ENCODE measurements at regions of chr13 and their contacts with region 1.

Region 1: GRCh38 chr13:99436686-99437416 is 64.4 kb upstream of the TM9SF2 start:
- DNase-seq: peak; percentile 98
- H3K4me3 Mint-ChIP-seq: peak overlapping the region; percentile 21
- H3K27ac Mint-ChIP-seq: peak overlapping the region; percentile 23
- H3K4me1 Mint-ChIP-seq: peaks cover 55% of the 10 kb centered on the region
- H3K27me3 Mint-ChIP-seq: no peaks in the 10 kb centered on the region

Region 2: GRCh38 chr13:99041788-99042187 is 395.1 kb before region 1 on chr13:
- CTCF ChIA-PET with region 1: interaction called, 3 read pairs
- intact Hi-C with region 1: loop called (anchors 5 kb)
- DNase-seq: no peak
- H3K4me3 Mint-ChIP-seq: no peak overlapping the region
- H3K27ac Mint-ChIP-seq: no peak overlapping the region
- H3K4me1 Mint-ChIP-seq: peaks cover 80% of the 10 kb centered on the region
- H3K27me3 Mint-ChIP-seq: no peaks in the 10 kb centered on the region

Region 3: GRCh38 chr13:99214232-99214631 is 222.6 kb before region 1 on chr13:
- CTCF ChIA-PET with region 1: interaction called, 3 read pairs
- intact Hi-C with region 1: loop called (anchors 1 kb)
- DNase-seq: peak; percentile 83
- H3K4me3 Mint-ChIP-seq: peak overlapping the region; percentile 72
- H3K27ac Mint-ChIP-seq: peak overlapping the region; percentile 78
- H3K4me1 Mint-ChIP-seq: peaks cover 82% of the 10 kb centered on the region
- H3K27me3 Mint-ChIP-seq: no peaks in the 10 kb centered on the region

Region 4: DNA sequence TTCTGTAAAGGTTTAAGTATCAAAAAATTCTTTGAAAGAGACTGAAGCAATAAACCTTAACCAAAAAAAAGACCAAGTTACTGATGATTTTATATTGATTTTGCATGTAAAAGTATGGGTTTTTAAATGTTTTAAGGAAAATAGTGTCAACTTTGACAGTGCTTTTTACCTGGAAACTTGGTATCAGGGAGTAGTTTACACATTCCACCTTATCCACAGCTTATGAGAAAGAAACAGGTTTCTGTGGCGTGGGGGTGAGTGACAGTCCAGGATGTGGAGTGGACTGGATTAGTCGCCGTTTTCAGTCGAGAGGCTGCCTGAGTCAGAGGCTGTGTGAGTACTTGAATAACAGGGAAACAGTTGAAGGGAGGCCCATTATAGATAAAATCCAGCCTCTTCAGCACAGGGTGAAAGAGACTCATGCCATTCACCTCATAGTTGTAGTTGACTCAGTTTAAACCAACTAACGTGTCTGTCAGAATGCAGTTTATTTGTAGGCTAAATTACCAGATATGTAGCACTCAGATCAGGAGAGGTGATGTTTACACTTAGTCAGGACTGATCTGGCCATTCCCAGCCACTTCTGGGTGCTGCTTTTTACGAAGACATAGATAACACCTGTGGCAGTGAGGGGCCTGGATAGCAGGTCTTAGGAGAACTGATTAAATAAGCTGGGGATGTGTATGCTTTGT is 129.1 kb before region 1 on chr13:
- CTCF ChIA-PET with region 1: interaction called, 59 read pairs
- intact Hi-C with region 1: loop called (anchors 1 kb)
- DNase-seq: peak; percentile 89
- H3K4me3 Mint-ChIP-seq: peak overlapping the region; percentile 93
- H3K27ac Mint-ChIP-seq: peak overlapping the region; percentile 99
- H3K4me1 Mint-ChIP-seq: peaks cover 73% of the 10 kb centered on the region
- H3K27me3 Mint-ChIP-seq: no peaks in the 10 kb centered on the region

Region 5: GRCh38 chr13:99374994-99375737 is 61.7 kb before region 1 on chr13:
- CTCF ChIA-PET with region 1: interaction called, 288 read pairs
- intact Hi-C with region 1: loop called (anchors 1 kb)
- DNase-seq: no peak
- H3K4me3 Mint-ChIP-seq: no peak overlapping the region
- H3K27ac Mint-ChIP-seq: no peak overlapping the region
- H3K4me1 Mint-ChIP-seq: peaks cover 80% of the 10 kb centered on the region
- H3K27me3 Mint-ChIP-seq: no peaks in the 10 kb centered on the region

Region 6: DNA sequence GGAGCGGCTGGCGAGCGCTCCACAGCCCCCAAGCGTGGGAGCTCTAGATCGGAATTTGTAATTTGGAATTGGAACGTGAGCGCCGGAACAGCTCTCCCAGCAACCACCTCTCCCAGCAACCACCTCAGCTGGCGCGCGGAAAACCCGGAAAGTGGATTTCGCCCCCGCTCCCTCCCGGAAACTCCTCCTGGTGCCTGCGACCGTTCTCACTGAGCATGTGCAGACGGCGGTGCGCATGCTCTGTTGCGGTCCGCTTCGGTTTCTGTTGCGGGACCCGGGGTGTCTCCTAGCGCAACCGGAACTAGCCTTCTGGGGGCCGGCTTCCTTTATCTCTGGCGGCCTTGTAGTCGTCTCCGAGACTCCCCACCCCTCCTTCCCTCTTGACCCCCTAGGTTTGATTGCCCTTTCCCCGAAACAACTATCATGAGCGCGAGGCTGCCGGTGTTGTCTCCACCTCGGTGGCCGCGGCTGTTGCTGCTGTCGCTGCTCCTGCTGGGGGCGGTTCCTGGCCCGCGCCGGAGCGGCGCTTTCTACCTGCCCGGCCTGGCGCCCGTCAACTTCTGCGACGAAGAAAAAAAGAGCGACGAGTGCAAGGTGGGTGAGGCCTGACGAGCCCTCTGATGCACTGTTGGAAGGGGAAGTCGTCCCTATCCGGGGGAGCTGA is 64.5 kb after region 1 on chr13 and contains the start of gene TM9SF2:
- CTCF ChIA-PET with region 1: interaction called, 16 read pairs
- intact Hi-C with region 1: loop called (anchors 1 kb)
- DNase-seq: peak; percentile 98
- H3K4me3 Mint-ChIP-seq: peak within 1 kb of the TSS; percentile 92
- H3K27ac Mint-ChIP-seq: peak within 1 kb of the TSS; percentile 92
- H3K4me1 Mint-ChIP-seq: peaks cover 70% of the 10 kb centered on the region
- H3K27me3 Mint-ChIP-seq: no peaks in the 10 kb centered on the region
- total RNA-seq, gene TM9SF2: 35.2 to 36.4 TPM

Region 7: GRCh38 chr13:99634672-99635071 is 197.8 kb after region 1 on chr13:
- CTCF ChIA-PET with region 1: no interaction called
- intact Hi-C with region 1: no loop called
- DNase-seq: no peak
- H3K4me3 Mint-ChIP-seq: no peak overlapping the region
- H3K27ac Mint-ChIP-seq: no peak overlapping the region
- H3K4me1 Mint-ChIP-seq: no peaks in the 10 kb centered on the region
- H3K27me3 Mint-ChIP-seq: no peaks in the 10 kb centered on the region